ENCODE measurements at regions of chr7 and their contacts with region 1.

Region 1: GRCh38 chr7:37674531-37674930 is 9.0 kb upstream of the GPR141 start:
- DNase-seq: peak; percentile 72 to 91 (median 86)
- H3K4me3 ChIP-seq: peak overlapping the region in 2 of 3 experiments; percentile 23 to 64
- H3K4me3 Mint-ChIP-seq: peak overlapping the region; percentile 28 to 87
- H3K27ac ChIP-seq: peak overlapping the region; percentile 39 to 86
- H3K27ac Mint-ChIP-seq: peak overlapping the region; percentile 83 to 93 (median 87)
- H3K4me1 ChIP-seq: peaks cover 65 to 76% of the 10 kb centered on the region in 2 donors
- H3K4me1 Mint-ChIP-seq: peaks cover 67% of the 10 kb centered on the region
- H3K27me3 ChIP-seq: no peaks in the 10 kb centered on the region
- H3K27me3 Mint-ChIP-seq: peaks cover 0 to 2% (median 0%) of the 10 kb centered on the region in 3 donors
- CTCF ChIP-seq: no peak

Region 2: DNA sequence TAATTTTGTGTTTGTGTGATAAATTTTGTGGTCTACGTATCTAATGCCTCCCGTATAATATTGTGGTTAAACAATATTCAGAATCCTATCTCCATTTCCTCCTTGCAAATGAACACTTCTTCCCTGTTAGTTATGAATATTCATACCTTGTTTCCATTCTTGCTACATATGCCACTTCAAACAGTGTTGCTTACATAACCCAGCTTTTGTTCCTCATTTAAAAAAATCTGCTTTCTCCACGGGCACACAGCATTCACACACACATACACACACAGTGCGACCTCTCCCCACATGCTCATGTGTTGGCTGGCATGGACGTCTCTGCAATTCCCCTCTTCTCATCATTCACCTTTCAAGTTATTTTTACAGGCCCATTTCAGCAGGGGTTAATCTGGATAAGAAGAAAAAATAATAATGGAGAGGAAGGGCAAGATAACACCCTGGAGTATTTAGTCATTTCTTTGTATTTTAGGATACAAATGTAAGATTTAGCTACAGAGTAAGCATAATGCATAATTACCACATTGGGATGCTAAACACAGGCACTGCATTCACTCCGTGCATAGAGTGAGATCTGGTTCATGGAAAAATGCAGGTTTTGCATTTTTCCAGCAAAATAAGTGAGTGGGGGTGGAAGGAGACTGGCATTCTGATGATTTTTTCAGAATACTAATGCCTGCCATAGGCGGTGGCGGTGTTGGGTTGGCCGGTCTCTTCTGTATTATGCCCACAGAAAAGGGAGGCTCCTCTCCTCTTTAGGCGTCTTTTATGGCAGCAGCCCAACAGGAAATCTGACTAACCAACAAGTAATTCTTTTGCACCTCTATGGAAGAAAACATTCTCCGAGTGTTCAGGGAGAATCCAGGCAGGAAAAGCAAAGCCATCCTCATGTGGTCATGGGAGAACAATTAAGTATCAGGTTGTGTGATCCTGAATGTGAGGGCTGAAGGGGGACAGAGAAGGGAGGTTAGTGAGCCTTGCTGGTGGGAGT is 194.2 kb before region 1 on chr7:
- intact Hi-C with region 1: no loop called
- DNase-seq: peak; percentile 64 to 84 (median 82)
- H3K4me3 ChIP-seq: peak overlapping the region in 2 of 3 experiments; percentile 27 to 60
- H3K4me3 Mint-ChIP-seq: peak overlapping the region; percentile 50 to 85
- H3K27ac ChIP-seq: peak overlapping the region in 1 of 2 donors; percentile 34
- H3K27ac Mint-ChIP-seq: peak overlapping the region; percentile 6 to 89 (median 67)
- H3K4me1 ChIP-seq: peaks cover 14 to 17% of the 10 kb centered on the region in 2 donors
- H3K4me1 Mint-ChIP-seq: peaks cover 19% of the 10 kb centered on the region
- H3K27me3 ChIP-seq: peaks cover 0 to 5% of the 10 kb centered on the region in 2 donors
- H3K27me3 Mint-ChIP-seq: peaks cover 1 to 17% (median 2%) of the 10 kb centered on the region in 3 donors
- CTCF ChIP-seq: no peak

Region 3: GRCh38 chr7:37524797-37525196 is 149.7 kb before region 1 on chr7:
- intact Hi-C with region 1: no loop called
- DNase-seq: no peak
- H3K4me3 ChIP-seq: no peak overlapping the region
- H3K4me3 Mint-ChIP-seq: no peak overlapping the region
- H3K27ac ChIP-seq: no peak overlapping the region
- H3K27ac Mint-ChIP-seq: no peak overlapping the region
- H3K4me1 ChIP-seq: no peaks in the 10 kb centered on the region
- H3K4me1 Mint-ChIP-seq: peaks cover 7% of the 10 kb centered on the region
- H3K27me3 ChIP-seq: no peaks in the 10 kb centered on the region
- H3K27me3 Mint-ChIP-seq: peaks cover 0 to 1% (median 1%) of the 10 kb centered on the region in 3 donors
- CTCF ChIP-seq: no peak

Region 4: GRCh38 chr7:37728757-37729156 is 54.2 kb after region 1 on chr7:
- intact Hi-C with region 1: loop called in 1 of 2 experiments (anchors 10 kb)
- DNase-seq: peak; percentile 54 to 84 (median 77)
- H3K4me3 ChIP-seq: peak overlapping the region in 1 of 3 experiments; percentile 26
- H3K4me3 Mint-ChIP-seq: peak overlapping the region in 1 of 2 donors; percentile 1
- H3K27ac ChIP-seq: peak overlapping the region; percentile 84 to 86
- H3K27ac Mint-ChIP-seq: peak overlapping the region; percentile 82 to 97 (median 90)
- H3K4me1 ChIP-seq: peaks cover 37 to 50% of the 10 kb centered on the region in 2 donors
- H3K4me1 Mint-ChIP-seq: peaks cover 56% of the 10 kb centered on the region
- H3K27me3 ChIP-seq: no peaks in the 10 kb centered on the region
- H3K27me3 Mint-ChIP-seq: no peaks in the 10 kb centered on the region
- CTCF ChIP-seq: no peak